GM12878 (cell line): ENCODE measurements at regions of chr9 and their contacts with region 1.

Region 1: GRCh38 chr9:78004478-78005229 is 27.0 kb downstream of the GNAQ start:
- DNase-seq: no peak
- ATAC-seq: peak; percentile 44
- H3K4me3 ChIP-seq: no peak overlapping the region
- H3K27ac ChIP-seq: no peak overlapping the region
- H3K4me1 ChIP-seq: no peaks in the 10 kb centered on the region
- H3K27me3 ChIP-seq: no peaks in the 10 kb centered on the region; a peak in 2 of 4 replicates
- CTCF ChIP-seq: peak; percentile 3 to 25 (median 6); a peak in 3 of 6 replicates
- EP300 ChIP-seq: no peak
- POLR2A ChIP-seq: no peak
- RAD21 ChIP-seq: no peak

Region 2: DNA sequence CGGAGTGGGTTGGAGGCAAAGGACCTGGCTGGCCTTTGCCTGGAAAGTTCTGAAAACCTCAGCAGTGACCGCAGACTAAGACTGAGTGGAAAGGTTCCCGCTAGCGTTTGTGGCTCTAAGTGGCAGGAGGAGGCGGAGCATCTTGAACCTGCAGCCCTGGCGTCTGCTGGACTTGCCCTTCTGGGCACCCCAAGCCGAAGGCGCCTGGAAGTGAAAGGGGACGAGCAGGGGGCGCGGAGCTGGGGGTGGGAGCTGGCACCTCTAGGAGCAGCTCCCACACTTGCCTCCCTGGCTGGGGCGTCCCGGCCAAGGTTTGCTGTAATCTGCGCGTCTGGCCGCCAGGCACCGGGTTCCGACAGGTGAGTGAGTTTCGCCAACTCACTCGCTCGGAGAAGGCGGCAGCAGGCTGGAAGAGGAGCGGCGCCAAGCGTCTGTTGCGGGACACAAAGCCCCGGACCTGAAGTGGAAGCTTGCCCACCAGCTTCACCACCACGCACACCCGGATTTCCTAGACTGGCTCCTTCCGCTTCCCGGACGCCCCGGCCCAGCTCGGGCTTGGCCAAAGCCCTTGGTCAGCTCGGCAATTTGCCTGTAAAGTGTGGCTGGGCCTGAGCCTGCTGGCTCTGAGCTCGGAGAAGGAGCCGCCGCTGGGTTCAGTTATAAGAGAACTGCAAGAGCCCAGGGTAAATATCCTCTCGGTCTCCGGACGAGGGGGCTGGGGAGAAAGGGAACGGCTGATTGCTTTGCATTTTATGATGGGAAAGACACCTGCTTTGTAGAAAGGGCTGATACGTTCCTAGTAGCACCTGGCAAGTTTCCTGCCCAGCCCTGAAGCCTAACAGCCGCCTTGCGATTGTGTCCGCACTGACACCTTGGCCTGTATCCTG is 356.2 kb before region 1 on chr9 and contains the start of gene GNA14:
- CTCF ChIA-PET with region 1: no interaction called
- POLR2A ChIA-PET with region 1: no interaction called
- RAD21 ChIA-PET with region 1: no interaction called
- SMC1A ChIA-PET with region 1: no interaction called
- in situ Hi-C with region 1: no loop called
- intact Hi-C with region 1: no loop called
- DNase-seq: no peak
- ATAC-seq: no peak
- H3K4me3 ChIP-seq: no peak within 1 kb of the TSS
- H3K27ac ChIP-seq: no peak within 1 kb of the TSS
- H3K4me1 ChIP-seq: no peaks in the 10 kb centered on the region
- H3K27me3 ChIP-seq: peaks cover 0 to 3% of the 10 kb centered on the region in 2 experiments; a peak in 1 of 4 replicates
- CTCF ChIP-seq: no peak
- EP300 ChIP-seq: no peak
- POLR2A ChIP-seq: no peak
- RAD21 ChIP-seq: no peak
- polyA plus RNA-seq, gene GNA14: not detected

Region 3: GRCh38 chr9:77987081-77987656 is 17.5 kb before region 1 on chr9:
- CTCF ChIA-PET with region 1: interaction called, 4 read pairs
- POLR2A ChIA-PET with region 1: interaction called, 3 read pairs
- RAD21 ChIA-PET with region 1: interaction called, 7 read pairs
- SMC1A ChIA-PET with region 1: interaction called, 12 read pairs
- in situ Hi-C with region 1: no loop called
- intact Hi-C with region 1: no loop called
- DNase-seq: no peak
- ATAC-seq: no peak
- H3K4me3 ChIP-seq: no peak overlapping the region
- H3K27ac ChIP-seq: no peak overlapping the region
- H3K4me1 ChIP-seq: no peaks in the 10 kb centered on the region
- H3K27me3 ChIP-seq: no peaks in the 10 kb centered on the region; a peak in 1 of 4 replicates
- CTCF ChIP-seq: no peak
- EP300 ChIP-seq: no peak
- POLR2A ChIP-seq: no peak
- RAD21 ChIP-seq: no peak

Region 4: DNA sequence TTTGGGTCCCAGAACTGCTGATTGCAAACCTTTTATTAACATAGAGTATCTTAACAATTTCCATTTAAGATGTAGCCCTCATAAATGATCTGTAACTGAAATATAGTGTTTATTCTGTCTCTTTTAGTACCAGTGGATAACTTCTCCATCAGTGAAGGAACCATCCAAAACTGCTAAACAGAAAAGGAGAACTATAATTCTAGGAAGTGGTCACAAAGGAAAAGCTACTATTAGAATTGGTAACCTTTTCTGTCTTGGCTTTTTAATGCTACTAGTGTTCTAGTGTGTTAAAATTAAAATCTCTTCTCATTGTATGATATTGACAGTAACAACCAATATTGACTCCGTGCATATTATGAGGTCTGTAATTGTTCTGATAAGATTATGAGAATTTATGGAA is 244.0 kb after region 1 on chr9:
- CTCF ChIA-PET with region 1: no interaction called
- POLR2A ChIA-PET with region 1: no interaction called
- RAD21 ChIA-PET with region 1: no interaction called
- SMC1A ChIA-PET with region 1: no interaction called
- in situ Hi-C with region 1: no loop called
- intact Hi-C with region 1: no loop called
- DNase-seq: no peak
- ATAC-seq: no peak
- H3K4me3 ChIP-seq: no peak overlapping the region
- H3K27ac ChIP-seq: no peak overlapping the region
- H3K4me1 ChIP-seq: no peaks in the 10 kb centered on the region
- H3K27me3 ChIP-seq: no peaks in the 10 kb centered on the region
- CTCF ChIP-seq: no peak
- EP300 ChIP-seq: no peak
- POLR2A ChIP-seq: no peak
- RAD21 ChIP-seq: no peak